ENCODE measurements at regions of chr5 and their contacts with region 1.

Region 1: DNA sequence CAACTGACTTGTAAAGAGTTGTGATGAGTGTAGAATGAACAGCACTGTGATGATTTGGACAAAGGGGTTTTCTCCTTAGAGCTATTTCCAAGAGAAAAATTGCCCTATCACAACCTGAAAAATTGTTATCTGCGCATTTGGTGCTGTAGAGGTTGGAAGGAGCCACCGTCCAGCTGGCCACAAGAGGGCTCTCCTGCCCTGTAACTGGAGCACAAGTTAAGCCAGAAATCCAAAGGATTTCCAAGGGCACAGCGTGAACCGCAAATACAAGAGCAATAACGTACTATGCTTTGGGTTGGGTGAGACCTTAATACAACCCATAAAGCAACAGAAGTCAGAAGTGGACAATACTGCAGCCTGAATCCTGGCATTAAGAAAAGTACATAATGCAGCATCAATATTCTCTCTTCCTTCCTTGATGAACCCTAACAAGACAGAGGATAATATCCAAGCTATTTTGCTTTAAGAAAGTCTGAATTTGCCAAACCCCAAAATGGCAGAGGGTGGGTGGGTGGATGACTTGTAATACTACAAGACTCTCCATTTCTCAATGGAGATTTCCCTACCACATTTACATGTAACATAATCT is 56.8 kb upstream of the SMIM32 start:
- DNase-seq: peak; percentile 63
- ATAC-seq: peak; percentile 89
- H3K4me3 ChIP-seq: no peak overlapping the region
- H3K27ac ChIP-seq: no peak overlapping the region
- H3K4me1 ChIP-seq: no peaks in the 10 kb centered on the region
- H3K27me3 ChIP-seq: peaks cover 24% of the 10 kb centered on the region
- CTCF ChIP-seq: peak; percentile 88

Region 2: DNA sequence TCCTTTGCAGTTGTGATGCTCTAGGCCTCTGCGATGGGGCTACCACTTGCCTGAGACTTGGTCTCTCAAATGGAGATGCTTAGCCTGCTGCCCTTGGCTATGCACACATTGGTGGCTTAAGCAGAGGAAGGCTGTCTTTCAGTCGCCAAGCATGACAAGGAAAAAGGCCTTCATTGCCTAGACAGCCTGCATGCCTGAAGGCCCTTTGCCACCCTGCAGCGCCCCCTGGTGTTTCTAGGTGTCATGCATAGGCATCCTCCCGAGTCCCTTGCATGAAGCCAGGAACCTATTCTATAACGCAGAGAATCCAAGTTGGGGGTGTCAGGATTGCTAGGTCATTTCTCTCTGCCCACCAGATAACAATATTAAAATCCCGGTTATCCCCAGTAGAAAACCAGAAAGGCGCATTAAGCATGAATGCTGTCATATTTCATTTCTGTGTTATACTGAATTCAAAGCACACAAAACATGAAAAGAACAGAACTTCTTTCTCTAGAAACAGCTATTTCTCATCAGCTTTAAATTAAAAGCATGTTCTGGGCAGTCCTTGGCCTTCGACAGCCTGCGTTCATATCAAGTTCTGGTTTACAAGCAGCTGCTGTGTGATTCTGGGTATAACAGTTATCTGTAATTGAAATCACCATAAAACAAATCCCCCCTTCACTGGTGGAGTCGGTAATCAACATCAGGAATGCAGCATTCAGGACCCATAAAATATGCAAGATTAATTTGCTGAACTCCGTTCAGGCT is 175.2 kb after region 1 on chr5:
- CTCF ChIA-PET with region 1: no interaction called
- POLR2A ChIA-PET with region 1: no interaction called
- intact Hi-C with region 1: loop called (anchors 10 kb)
- DNase-seq: peak; percentile 59
- ATAC-seq: peak; percentile 57; the same call in 1 of the 2 replicates
- H3K4me3 ChIP-seq: no peak overlapping the region
- H3K27ac ChIP-seq: no peak overlapping the region
- H3K4me1 ChIP-seq: no peaks in the 10 kb centered on the region
- H3K27me3 ChIP-seq: peaks cover 21% of the 10 kb centered on the region
- CTCF ChIP-seq: peak; percentile 75

Region 3: GRCh38 chr5:136686192-136686872 is 436.6 kb after region 1 on chr5:
- CTCF ChIA-PET with region 1: no interaction called
- POLR2A ChIA-PET with region 1: no interaction called
- intact Hi-C with region 1: loop called (anchors 2 kb)
- DNase-seq: peak; percentile 83
- ATAC-seq: peak; percentile 80
- H3K4me3 ChIP-seq: no peak overlapping the region
- H3K27ac ChIP-seq: peak overlapping the region; percentile 20; the same call in 1 of the 2 replicates
- H3K4me1 ChIP-seq: peaks cover 4% of the 10 kb centered on the region
- H3K27me3 ChIP-seq: no peaks in the 10 kb centered on the region
- CTCF ChIP-seq: peak; percentile 65

Measured in PC-3 (cell line).